HEK293T (cell line): ENCODE measurements at regions of chr16 and their contacts with region 1.

Region 1: GRCh38 chr16:30534368-30535105 is at the start of gene ZNF747:
- DNase-seq: peak; percentile 93

Region 2: GRCh38 chr16:30429678-30430427 is 104.7 kb before region 1 on chr16 and contains the start of gene DCTPP1:
- CTCF ChIA-PET with region 1: interaction called, 8 read pairs
- POLR2A ChIA-PET with region 1: interaction called, 37 read pairs
- DNase-seq: peak; percentile 98

Region 3: DNA sequence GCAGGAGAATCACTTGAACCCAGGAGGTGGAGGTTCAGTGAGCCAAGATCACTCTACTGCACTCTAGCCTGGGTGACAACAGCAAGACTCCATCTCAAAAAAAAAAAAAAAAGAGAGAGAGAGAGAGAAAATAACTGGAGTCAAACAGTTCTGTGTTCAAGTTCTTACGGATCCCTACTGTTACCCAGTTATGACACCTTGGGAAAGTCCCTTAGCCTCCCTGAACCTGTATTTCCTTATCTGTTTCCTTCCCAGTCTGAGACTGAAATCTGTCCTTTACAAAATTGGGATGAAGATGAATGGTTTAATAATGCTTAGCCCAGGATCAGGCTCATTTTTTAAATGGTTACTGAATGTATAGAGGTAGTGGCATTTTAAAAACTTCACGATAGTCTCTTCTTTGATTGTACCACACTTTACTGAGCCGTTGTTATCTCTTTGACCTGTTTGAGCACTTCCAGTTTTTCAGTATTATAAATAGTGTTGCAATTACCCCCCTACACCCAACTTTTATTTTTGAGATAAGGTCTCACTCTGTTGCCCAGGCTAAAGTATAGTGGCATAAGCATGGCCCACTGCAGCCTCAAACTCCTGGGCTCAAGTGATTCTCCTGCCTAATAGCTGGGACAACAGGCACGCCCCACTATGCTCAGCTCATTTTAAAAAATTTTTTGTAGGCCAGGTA is 25.3 kb before region 1 on chr16:
- CTCF ChIA-PET with region 1: no interaction called
- POLR2A ChIA-PET with region 1: interaction called, 10 read pairs
- DNase-seq: no peak

Region 4: GRCh38 chr16:30557957-30558788 is 23.6 kb after region 1 on chr16 and contains the start of gene ZNF764:
- CTCF ChIA-PET with region 1: interaction called, 19 read pairs
- POLR2A ChIA-PET with region 1: interaction called, 181 read pairs
- DNase-seq: peak; percentile 98

Region 5: DNA sequence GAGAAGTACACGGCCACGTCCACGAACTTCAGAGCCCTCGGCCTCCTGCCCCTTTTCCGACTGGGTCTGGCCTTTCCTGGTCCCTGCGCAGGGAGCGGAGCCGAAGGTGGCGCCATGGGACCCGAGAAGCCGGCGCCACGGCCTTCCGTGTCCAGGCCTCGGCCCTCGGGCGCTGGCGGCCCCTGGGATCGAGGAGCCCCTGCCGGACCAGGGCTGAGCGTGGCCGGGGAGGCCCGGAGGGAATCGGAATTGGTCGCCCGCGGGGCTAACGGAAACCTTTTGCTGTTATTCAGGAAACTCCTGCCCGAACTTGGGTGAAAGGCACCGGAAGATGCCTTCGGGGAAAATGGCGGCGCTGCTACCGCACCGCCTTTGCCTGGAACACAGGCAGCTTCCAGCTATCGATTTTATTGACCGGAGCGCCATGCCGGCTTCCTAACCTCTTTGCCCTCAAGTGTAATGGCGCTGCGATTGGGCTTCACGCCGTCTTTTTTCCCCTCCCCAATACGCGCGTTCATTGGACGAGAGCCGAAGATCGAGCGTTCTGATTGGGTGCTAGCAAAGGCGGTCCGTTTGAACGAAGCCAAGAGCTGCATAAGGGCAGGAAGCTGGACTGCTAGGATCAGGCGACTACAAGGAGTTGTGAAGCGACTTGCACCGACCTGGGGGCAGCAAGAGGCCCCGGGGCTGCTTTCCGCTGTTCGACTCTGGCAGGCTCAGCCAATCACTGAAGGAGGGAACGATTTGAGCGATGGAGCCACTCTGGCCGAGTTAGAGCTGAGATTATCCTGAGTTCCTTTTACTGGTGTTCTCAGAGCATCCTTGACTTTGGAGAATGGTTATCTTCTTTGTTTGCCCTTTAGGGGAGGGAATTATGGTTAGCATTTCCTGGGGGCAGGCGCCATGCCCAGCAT is 75.6 kb after region 1 on chr16 and contains the start of gene ZNF689:
- CTCF ChIA-PET with region 1: interaction called, 12 read pairs
- POLR2A ChIA-PET with region 1: interaction called, 44 read pairs
- DNase-seq: peak; percentile 100

Region 6: GRCh38 chr16:30637942-30638341 is 103.4 kb after region 1 on chr16:
- CTCF ChIA-PET with region 1: interaction called, 5 read pairs
- POLR2A ChIA-PET with region 1: interaction called, 17 read pairs
- DNase-seq: peak; percentile 48